AG04449 (cell line): ENCODE measurements at regions of chr17 and their contacts with region 1.

Region 1: GRCh38 chr17:36475346-36475970 is 11.0 kb upstream of the ZNHIT3 start:
- DNase-seq: no peak
- H3K4me3 ChIP-seq: no peak overlapping the region
- CTCF ChIP-seq: no peak

Region 2: GRCh38 chr17:36463916-36464315 is 11.5 kb before region 1 on chr17:
- CTCF ChIA-PET with region 1: no interaction called
- POLR2A ChIA-PET with region 1: no interaction called
- DNase-seq: no peak
- H3K4me3 ChIP-seq: no peak overlapping the region
- CTCF ChIP-seq: no peak

Region 3: DNA sequence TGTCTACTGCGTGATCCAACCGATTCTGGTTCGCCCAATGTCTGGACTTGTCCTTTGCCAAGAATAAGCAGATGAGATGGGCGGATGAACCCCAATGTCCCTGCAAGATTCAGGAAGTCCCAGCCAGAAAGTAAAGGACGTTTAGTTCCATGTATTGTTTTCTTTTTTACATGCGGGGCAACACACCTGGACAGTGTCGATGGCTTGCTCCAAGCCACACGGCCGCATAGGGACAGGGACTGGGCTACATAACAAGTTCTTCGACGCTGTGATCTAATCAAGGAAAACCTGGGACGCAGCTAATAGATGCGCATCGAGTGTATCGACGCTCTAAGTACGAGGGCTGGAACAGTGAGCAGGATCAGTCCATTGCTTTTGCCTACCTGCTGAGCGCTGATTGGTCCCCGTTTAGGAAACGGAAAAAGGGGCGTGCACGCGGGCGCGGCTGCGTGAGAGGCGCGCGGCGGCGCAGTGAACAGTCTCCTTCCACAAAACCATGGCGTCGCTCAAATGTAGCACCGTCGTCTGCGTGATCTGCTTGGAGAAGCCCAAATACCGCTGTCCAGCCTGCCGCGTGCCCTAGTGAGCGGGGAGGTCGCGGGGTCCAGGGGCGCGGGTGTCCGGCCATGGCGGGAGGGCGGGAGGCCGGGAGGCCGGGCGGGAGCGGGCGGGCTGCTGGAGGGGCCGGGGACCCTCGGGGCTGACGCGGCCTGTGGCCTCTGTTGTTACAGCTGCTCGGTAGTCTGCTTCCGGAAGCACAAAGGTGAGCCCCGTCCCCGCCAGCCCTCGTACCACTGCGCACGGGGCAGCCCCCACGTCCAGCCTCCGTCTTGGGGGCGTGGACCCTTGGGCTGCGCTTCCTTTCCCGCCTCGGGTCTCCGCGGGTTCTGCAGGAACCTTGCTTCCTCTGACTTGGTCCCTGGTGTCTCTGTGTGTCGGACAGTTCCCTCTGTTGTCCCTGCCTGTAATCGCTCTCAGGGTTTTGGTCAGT is 11.0 kb after region 1 on chr17 and contains the start of gene ZNHIT3:
- CTCF ChIA-PET with region 1: interaction called, 10 read pairs
- POLR2A ChIA-PET with region 1: no interaction called
- DNase-seq: peak; percentile 67
- H3K4me3 ChIP-seq: peak within 1 kb of the TSS; percentile 91
- CTCF ChIP-seq: no peak

Region 4: GRCh38 chr17:36500745-36501225 is 25.3 kb after region 1 on chr17:
- CTCF ChIA-PET with region 1: no interaction called
- POLR2A ChIA-PET with region 1: no interaction called
- DNase-seq: no peak
- H3K4me3 ChIP-seq: no peak overlapping the region
- CTCF ChIP-seq: no peak

Region 5: GRCh38 chr17:36591434-36592315 is 116.2 kb after region 1 on chr17 and contains the start of gene DHRS11:
- CTCF ChIA-PET with region 1: no interaction called
- POLR2A ChIA-PET with region 1: no interaction called
- DNase-seq: no peak
- H3K4me3 ChIP-seq: peak within 1 kb of the TSS; percentile 68
- CTCF ChIP-seq: no peak